Heart left ventricle (tissue), 16 donors: ENCODE measurements at regions of chr14 and their contacts with region 1.

Region 1: GRCh38 chr14:53953002-53953827 is 3.4 kb downstream of the BMP4 start:
- DNase-seq: peak; percentile 85 to 92 (median 90)
- ATAC-seq: peak; percentile 52 to 93 (median 86)
- H3K4me3 ChIP-seq: peak overlapping the region; percentile 57 to 93 (median 74)
- H3K27ac ChIP-seq: peak overlapping the region; percentile 82 to 97 (median 88)
- H3K4me1 ChIP-seq: peaks cover 0 to 54% (median 10%) of the 10 kb centered on the region in 12 donors
- H3K27me3 ChIP-seq: peaks cover 0 to 44% (median 7%) of the 10 kb centered on the region in 9 donors
- CTCF ChIP-seq: no peak
- POLR2A ChIP-seq: peak; percentile 9 to 89

Region 2: GRCh38 chr14:53715193-53715721 is 238.0 kb before region 1 on chr14:
- intact Hi-C with region 1: loop called in 3 of 10 experiments (anchors 2 to 10 kb)
- DNase-seq: no peak
- ATAC-seq: peak; percentile 59 to 92 (median 82)
- H3K4me3 ChIP-seq: peak overlapping the region in 8 of 12 donors; percentile 5 to 41 (median 14)
- H3K27ac ChIP-seq: peak overlapping the region; percentile 27 to 76 (median 53)
- H3K4me1 ChIP-seq: peaks cover 0 to 36% (median 13%) of the 10 kb centered on the region in 12 donors
- H3K27me3 ChIP-seq: no peaks in the 10 kb centered on the region
- CTCF ChIP-seq: no peak
- POLR2A ChIP-seq: no peak

Region 3: DNA sequence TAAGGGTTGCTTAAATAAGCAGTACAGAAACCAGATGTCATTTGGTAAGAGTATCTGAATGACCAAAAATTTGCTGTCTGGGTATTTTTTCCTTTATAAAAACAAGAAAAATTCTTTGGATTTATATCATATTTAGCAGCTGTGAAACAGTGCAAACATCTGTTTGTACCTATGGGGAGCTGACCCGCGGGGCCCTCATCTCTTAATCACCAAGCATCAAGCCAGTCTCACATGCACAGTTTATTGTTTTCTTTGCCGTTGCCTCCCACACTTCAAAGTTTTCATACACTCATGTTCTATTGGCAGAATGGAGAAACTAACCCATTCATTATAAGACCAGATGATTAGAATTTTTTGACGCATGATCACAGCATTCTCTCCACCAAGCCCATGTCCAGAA is 138.8 kb before region 1 on chr14:
- intact Hi-C with region 1: loop called in 2 of 10 experiments (anchors 5 to 10 kb)
- DNase-seq: no peak
- ATAC-seq: peak in 2 of 4 donors; percentile 51 to 54
- H3K4me3 ChIP-seq: no peak overlapping the region
- H3K27ac ChIP-seq: peak overlapping the region in 2 of 12 donors; percentile 19 to 34
- H3K4me1 ChIP-seq: peaks cover 0 to 3% (median 0%) of the 10 kb centered on the region in 12 donors
- H3K27me3 ChIP-seq: no peaks in the 10 kb centered on the region
- CTCF ChIP-seq: no peak
- POLR2A ChIP-seq: no peak

Region 4: GRCh38 chr14:53881161-53881871 is 71.9 kb before region 1 on chr14:
- intact Hi-C with region 1: loop called in 2 of 10 experiments (anchors 5 kb)
- DNase-seq: no peak
- ATAC-seq: no peak
- H3K4me3 ChIP-seq: no peak overlapping the region
- H3K27ac ChIP-seq: peak overlapping the region in 4 of 12 donors; percentile 4 to 40 (median 26)
- H3K4me1 ChIP-seq: peaks cover 0 to 38% (median 6%) of the 10 kb centered on the region in 12 donors
- H3K27me3 ChIP-seq: no peaks in the 10 kb centered on the region
- CTCF ChIP-seq: no peak
- POLR2A ChIP-seq: no peak

Region 5: GRCh38 chr14:54175298-54175942 is 222.2 kb after region 1 on chr14:
- intact Hi-C with region 1: loop called in 6 of 10 experiments (anchors 2 to 10 kb)
- DNase-seq: peak in 4 of 5 donors; percentile 31 to 61 (median 46)
- ATAC-seq: peak in 3 of 4 donors; percentile 50 to 62 (median 58)
- H3K4me3 ChIP-seq: no peak overlapping the region
- H3K27ac ChIP-seq: peak overlapping the region in 4 of 12 donors; percentile 3 to 64 (median 36)
- H3K4me1 ChIP-seq: peaks cover 0 to 46% (median 21%) of the 10 kb centered on the region in 12 donors
- H3K27me3 ChIP-seq: peaks cover 0 to 3% (median 0%) of the 10 kb centered on the region in 9 donors
- CTCF ChIP-seq: peak; percentile 75 to 92 (median 86)
- POLR2A ChIP-seq: no peak

Region 6: GRCh38 chr14:54347997-54348611 is 394.9 kb after region 1 on chr14:
- intact Hi-C with region 1: loop called in 2 of 10 experiments (anchors 10 kb)
- DNase-seq: no peak
- ATAC-seq: peak in 2 of 4 donors; percentile 34 to 51
- H3K4me3 ChIP-seq: no peak overlapping the region
- H3K27ac ChIP-seq: peak overlapping the region in 8 of 12 donors; percentile 37 to 81 (median 68)
- H3K4me1 ChIP-seq: peaks cover 0 to 39% (median 13%) of the 10 kb centered on the region in 12 donors
- H3K27me3 ChIP-seq: no peaks in the 10 kb centered on the region
- CTCF ChIP-seq: peak; percentile 59 to 82 (median 71)
- POLR2A ChIP-seq: no peak